Sciatic nerve (tissue), 2 donors: ENCODE measurements at regions of chr12 and their contacts with region 1.

Region 1: DNA sequence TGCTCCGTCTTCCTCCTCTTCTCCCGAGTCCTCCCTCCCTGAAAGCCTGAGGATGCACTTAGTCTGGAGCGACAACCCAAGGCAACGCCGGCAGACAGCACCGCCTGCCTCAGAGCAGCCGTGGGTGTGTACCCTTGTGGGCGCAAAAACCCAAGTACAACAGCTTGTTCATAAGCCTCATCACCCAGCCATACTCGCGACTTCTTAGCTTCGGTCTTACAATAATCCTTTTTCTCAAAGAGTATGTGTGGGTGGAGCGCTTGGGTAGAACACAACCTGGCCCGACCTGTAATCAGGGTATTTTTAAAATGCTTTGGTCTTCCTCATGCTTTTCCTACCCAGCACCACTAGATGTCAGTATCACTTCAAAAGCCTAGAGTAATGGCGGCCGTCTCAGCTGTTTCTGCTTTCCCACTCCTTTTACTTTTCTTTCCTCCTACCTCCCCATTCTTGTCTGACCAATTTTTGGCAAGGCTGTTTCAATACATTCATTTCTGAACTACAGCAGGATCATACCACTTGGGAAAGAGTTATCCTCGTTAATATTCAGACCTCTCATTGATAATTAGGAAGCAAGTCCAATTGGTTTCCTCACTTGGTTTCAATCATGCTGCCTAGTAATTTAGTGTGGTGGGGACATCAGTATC is 198.9 kb downstream of the EPS8 start:
- DNase-seq: no peak
- ATAC-seq: peak; percentile 89

Region 2: DNA sequence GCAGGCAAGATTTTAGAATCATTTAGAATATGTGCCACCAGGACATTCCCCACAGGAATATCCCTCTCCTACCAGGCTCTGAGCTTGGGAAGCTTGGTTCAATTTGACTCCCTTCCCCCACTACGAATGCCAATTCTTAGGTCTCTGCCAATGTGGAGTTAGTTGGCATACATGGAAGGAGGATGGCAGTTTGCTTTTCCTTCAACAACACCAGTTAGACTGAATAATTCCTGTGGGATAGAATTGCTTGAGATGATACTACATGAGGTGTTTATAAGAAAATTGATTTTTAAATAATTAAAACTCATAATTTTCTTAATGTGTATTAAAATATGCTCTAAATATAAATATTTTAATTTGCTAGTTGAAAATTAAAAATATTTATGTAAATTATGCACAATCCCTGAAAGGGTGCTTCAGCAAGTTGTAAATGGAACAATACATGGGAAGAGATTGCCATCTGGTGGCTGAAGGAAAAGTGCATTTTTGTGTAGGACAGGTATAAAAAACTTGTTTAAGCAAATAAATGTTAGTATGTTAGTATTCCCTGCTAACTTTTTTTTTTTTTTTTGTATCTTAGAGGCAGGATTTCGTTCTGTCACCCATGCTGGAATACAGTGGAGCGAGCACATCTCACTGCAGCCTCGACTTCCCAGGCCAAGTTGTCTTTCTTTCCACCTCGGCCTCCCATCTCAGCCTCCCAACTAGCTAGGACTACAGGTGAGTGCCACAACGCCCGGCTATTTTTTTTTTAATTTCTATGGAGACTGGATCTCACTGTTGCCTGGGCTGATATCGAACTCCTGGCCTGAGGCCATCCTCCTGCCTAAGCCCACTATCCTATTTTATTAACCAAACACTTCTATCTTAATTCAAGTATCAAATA is 266.0 kb after region 1 on chr12:
- intact Hi-C with region 1: loop called (anchors 5 kb)
- DNase-seq: no peak
- ATAC-seq: peak; percentile 86